ENCODE measurements at regions of chr2 and their contacts with region 1.

Region 1: GRCh38 chr2:196660244-196660643 is 20.7 kb downstream of the CCDC150 start:
- DNase-seq: no peak

Region 2: GRCh38 chr2:196601430-196602306 is 58.6 kb before region 1 on chr2:
- intact Hi-C with region 1: loop called in 1 of 2 experiments (anchors 10 kb)
- DNase-seq: no peak

Region 3: GRCh38 chr2:196758474-196759377 is 98.5 kb after region 1 on chr2:
- intact Hi-C with region 1: no loop called
- DNase-seq: no peak

Measured in posterior vena cava (tissue), 2 donors.